ENCODE measurements at regions of chr4 and their contacts with region 1.

Region 1: GRCh38 chr4:83639849-83640493 is 104.1 kb downstream of the GPAT3 start:
- H3K4me3 Mint-ChIP-seq: no peak overlapping the region
- H3K27ac Mint-ChIP-seq: no peak overlapping the region
- H3K4me1 Mint-ChIP-seq: peaks cover 22% of the 10 kb centered on the region
- H3K27me3 Mint-ChIP-seq: peaks cover 20% of the 10 kb centered on the region

Region 2: GRCh38 chr4:83362492-83363329 is 277.3 kb before region 1 on chr4:
- intact Hi-C with region 1: loop called (anchors 10 kb)
- H3K4me3 Mint-ChIP-seq: no peak overlapping the region
- H3K27ac Mint-ChIP-seq: no peak overlapping the region
- H3K4me1 Mint-ChIP-seq: peaks cover 12% of the 10 kb centered on the region
- H3K27me3 Mint-ChIP-seq: peaks cover 31% of the 10 kb centered on the region

Region 3: DNA sequence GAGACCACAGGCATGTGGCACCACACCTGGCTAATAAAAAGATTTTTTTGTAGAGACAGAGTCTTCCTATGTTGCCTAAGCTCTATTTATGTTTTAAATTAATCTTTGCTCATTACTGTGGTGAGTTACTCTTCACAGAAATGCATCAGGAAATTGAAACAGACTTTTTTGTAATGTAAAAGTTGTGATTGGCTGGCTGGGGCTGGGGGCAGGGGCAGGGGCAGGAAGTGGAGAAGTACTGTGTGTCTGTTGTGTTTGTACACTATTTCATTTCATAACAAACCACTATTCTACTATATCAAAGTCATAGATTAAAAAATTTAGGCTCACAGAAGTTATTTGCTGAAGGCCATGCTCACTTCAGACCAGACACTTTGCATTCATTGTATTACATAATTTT is 136.0 kb before region 1 on chr4:
- intact Hi-C with region 1: loop called (anchors 1 kb)
- H3K4me3 Mint-ChIP-seq: no peak overlapping the region
- H3K27ac Mint-ChIP-seq: no peak overlapping the region
- H3K4me1 Mint-ChIP-seq: peaks cover 9% of the 10 kb centered on the region
- H3K27me3 Mint-ChIP-seq: peaks cover 2% of the 10 kb centered on the region

Region 4: GRCh38 chr4:84503495-84504437 is 863.8 kb after region 1 on chr4:
- intact Hi-C with region 1: loop called (anchors 1 kb)
- H3K4me3 Mint-ChIP-seq: no peak overlapping the region
- H3K27ac Mint-ChIP-seq: no peak overlapping the region
- H3K4me1 Mint-ChIP-seq: peaks cover 24% of the 10 kb centered on the region
- H3K27me3 Mint-ChIP-seq: peaks cover 76% of the 10 kb centered on the region

Measured in dendritic cell treated with granulocyte-macrophage colony-stimulating factor and Interleukin-4, amounts not matched to agents 40 ng/mL and 50 ng/mL, for 4 days (primary cell).